GM12878 (cell line): ENCODE measurements at regions of chr2 and their contacts with region 1.

Region 1: GRCh38 chr2:185279999-185280398 is 458.6 kb upstream of the FSIP2 start:
- DNase-seq: no peak
- ATAC-seq: peak; percentile 44; the same call in 1 of the 3 replicates
- H3K4me3 ChIP-seq: no peak overlapping the region
- H3K27ac ChIP-seq: no peak overlapping the region
- H3K4me1 ChIP-seq: no peaks in the 10 kb centered on the region
- H3K27me3 ChIP-seq: no peaks in the 10 kb centered on the region
- CTCF ChIP-seq: peak; percentile 26 to 52 (median 42); a peak in 3 of 6 replicates
- EP300 ChIP-seq: no peak
- POLR2A ChIP-seq: no peak
- RAD21 ChIP-seq: peak; percentile 52

Region 2: DNA sequence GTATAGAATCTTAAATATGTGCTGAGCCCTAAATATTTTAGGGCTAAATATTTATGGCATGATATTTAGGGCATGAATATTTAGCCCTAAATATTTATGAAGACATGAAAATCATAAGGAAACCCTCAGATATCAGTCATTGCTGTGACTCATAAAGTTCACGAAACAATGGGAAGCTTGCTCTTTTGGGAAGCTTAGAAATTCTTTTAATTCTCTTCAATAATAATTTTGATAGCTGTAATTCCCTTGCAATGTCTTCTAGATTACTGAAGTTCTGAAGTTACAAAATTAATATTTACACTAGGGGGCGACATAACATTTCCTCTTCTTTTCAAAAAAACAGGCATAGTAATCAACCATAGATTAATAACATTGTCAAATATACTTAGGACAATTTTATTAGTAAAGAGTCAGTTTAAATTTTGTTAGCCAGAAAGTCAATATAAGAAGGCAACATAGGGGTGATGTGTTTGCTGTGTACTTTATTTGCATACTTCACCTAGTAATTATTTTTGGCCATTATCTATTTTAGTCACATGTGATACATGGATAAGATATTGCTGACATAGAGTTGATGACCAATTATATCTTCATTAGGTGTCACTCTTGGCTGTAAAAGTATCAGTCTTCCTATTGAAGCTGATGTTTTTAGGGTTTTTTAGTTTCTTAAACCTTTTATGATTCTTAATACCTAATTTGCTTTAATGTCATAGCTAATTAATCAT is 668.5 kb before region 1 on chr2:
- CTCF ChIA-PET with region 1: interaction called, 6 read pairs
- POLR2A ChIA-PET with region 1: no interaction called
- RAD21 ChIA-PET with region 1: no interaction called
- SMC1A ChIA-PET with region 1: no interaction called
- in situ Hi-C with region 1: no loop called
- intact Hi-C with region 1: loop called (anchors 10 kb)
- DNase-seq: no peak
- ATAC-seq: peak; percentile 34; the same call in 1 of the 3 replicates
- H3K4me3 ChIP-seq: no peak overlapping the region
- H3K27ac ChIP-seq: no peak overlapping the region
- H3K4me1 ChIP-seq: no peaks in the 10 kb centered on the region
- H3K27me3 ChIP-seq: no peaks in the 10 kb centered on the region
- CTCF ChIP-seq: peak in 2 of 3 experiments; percentile 31 to 32; a peak in 4 of 6 replicates
- EP300 ChIP-seq: no peak
- POLR2A ChIP-seq: no peak
- RAD21 ChIP-seq: peak; percentile 19; the same call in 1 of the 2 replicates

Region 3: GRCh38 chr2:184780944-184781343 is 499.1 kb before region 1 on chr2:
- CTCF ChIA-PET with region 1: no interaction called
- POLR2A ChIA-PET with region 1: no interaction called
- RAD21 ChIA-PET with region 1: no interaction called
- SMC1A ChIA-PET with region 1: no interaction called
- in situ Hi-C with region 1: no loop called
- intact Hi-C with region 1: no loop called
- DNase-seq: no peak
- ATAC-seq: no peak
- H3K4me3 ChIP-seq: no peak overlapping the region
- H3K27ac ChIP-seq: no peak overlapping the region
- H3K4me1 ChIP-seq: no peaks in the 10 kb centered on the region
- H3K27me3 ChIP-seq: no peaks in the 10 kb centered on the region
- CTCF ChIP-seq: no peak
- EP300 ChIP-seq: no peak
- POLR2A ChIP-seq: no peak
- RAD21 ChIP-seq: no peak

Region 4: GRCh38 chr2:185208261-185208660 is 71.7 kb before region 1 on chr2:
- CTCF ChIA-PET with region 1: interaction called, 149 read pairs
- POLR2A ChIA-PET with region 1: no interaction called
- RAD21 ChIA-PET with region 1: interaction called, 112 read pairs
- SMC1A ChIA-PET with region 1: interaction called, 70 read pairs
- in situ Hi-C with region 1: no loop called
- intact Hi-C with region 1: loop called (anchors 5 kb)
- DNase-seq: no peak
- ATAC-seq: peak; percentile 76
- H3K4me3 ChIP-seq: no peak overlapping the region
- H3K27ac ChIP-seq: no peak overlapping the region
- H3K4me1 ChIP-seq: no peaks in the 10 kb centered on the region
- H3K27me3 ChIP-seq: no peaks in the 10 kb centered on the region
- CTCF ChIP-seq: peak; percentile 31 to 51 (median 46); a peak in 5 of 6 replicates
- EP300 ChIP-seq: no peak
- POLR2A ChIP-seq: no peak
- RAD21 ChIP-seq: peak; percentile 54

Region 5: GRCh38 chr2:185215497-185215896 is 64.5 kb before region 1 on chr2:
- CTCF ChIA-PET with region 1: interaction called, 149 read pairs
- POLR2A ChIA-PET with region 1: no interaction called
- RAD21 ChIA-PET with region 1: interaction called, 112 read pairs
- SMC1A ChIA-PET with region 1: interaction called, 70 read pairs
- in situ Hi-C with region 1: no loop called
- intact Hi-C with region 1: no loop called
- DNase-seq: no peak
- ATAC-seq: peak; percentile 85
- H3K4me3 ChIP-seq: no peak overlapping the region
- H3K27ac ChIP-seq: no peak overlapping the region
- H3K4me1 ChIP-seq: no peaks in the 10 kb centered on the region
- H3K27me3 ChIP-seq: no peaks in the 10 kb centered on the region
- CTCF ChIP-seq: peak in 1 of 3 experiments; percentile 4; a peak in 1 of 6 replicates
- EP300 ChIP-seq: no peak
- POLR2A ChIP-seq: no peak
- RAD21 ChIP-seq: no peak

Region 6: GRCh38 chr2:185245806-185246205 is 34.2 kb before region 1 on chr2:
- CTCF ChIA-PET with region 1: interaction called, 12 read pairs
- POLR2A ChIA-PET with region 1: no interaction called
- RAD21 ChIA-PET with region 1: no interaction called
- SMC1A ChIA-PET with region 1: interaction called, 11 read pairs
- in situ Hi-C with region 1: no loop called
- intact Hi-C with region 1: no loop called
- DNase-seq: no peak
- ATAC-seq: peak; percentile 36; the same call in 1 of the 3 replicates
- H3K4me3 ChIP-seq: no peak overlapping the region
- H3K27ac ChIP-seq: no peak overlapping the region
- H3K4me1 ChIP-seq: no peaks in the 10 kb centered on the region
- H3K27me3 ChIP-seq: no peaks in the 10 kb centered on the region
- CTCF ChIP-seq: no peak
- EP300 ChIP-seq: no peak
- POLR2A ChIP-seq: no peak
- RAD21 ChIP-seq: no peak

Region 7: DNA sequence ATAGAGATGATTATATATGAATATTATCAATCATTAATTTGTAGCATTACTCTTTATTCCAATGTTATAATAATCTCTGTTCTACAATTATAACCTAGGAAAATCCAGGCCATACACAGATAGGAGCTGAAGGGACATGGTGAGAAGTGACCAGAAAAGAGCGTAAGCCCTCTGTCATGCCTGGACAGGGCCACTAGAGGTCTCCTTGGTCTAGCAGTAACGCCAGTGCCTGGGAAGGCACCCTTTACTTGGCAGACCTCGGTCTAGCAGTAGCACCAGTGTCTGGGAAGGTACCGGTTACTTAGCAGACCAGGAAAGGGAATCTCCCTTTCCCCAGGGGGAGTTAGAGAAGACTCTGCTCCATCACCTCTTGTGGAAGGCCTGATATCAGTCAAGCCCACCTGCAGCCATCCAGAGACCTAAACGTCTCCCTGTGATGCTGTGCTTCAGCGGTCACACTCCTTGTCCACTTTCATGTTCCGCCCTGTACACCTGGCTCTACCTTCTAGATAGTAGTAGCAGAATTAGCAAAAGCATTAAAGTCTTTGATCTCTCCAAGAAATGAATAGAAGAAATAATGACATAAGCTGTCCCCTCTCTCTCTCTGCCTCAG is 11.1 kb after region 1 on chr2:
- CTCF ChIA-PET with region 1: interaction called, 37 read pairs
- POLR2A ChIA-PET with region 1: interaction called, 3 read pairs
- RAD21 ChIA-PET with region 1: interaction called, 3 read pairs
- SMC1A ChIA-PET with region 1: interaction called, 8 read pairs
- in situ Hi-C with region 1: no loop called
- intact Hi-C with region 1: no loop called
- DNase-seq: no peak
- ATAC-seq: peak; percentile 98
- H3K4me3 ChIP-seq: no peak overlapping the region
- H3K27ac ChIP-seq: no peak overlapping the region
- H3K4me1 ChIP-seq: no peaks in the 10 kb centered on the region
- H3K27me3 ChIP-seq: no peaks in the 10 kb centered on the region
- CTCF ChIP-seq: peak; percentile 49 to 71 (median 61)
- EP300 ChIP-seq: no peak
- POLR2A ChIP-seq: no peak
- RAD21 ChIP-seq: peak; percentile 77